Aorta (tissue), 5 donors: ENCODE measurements at regions of chr15 and their contacts with region 1.

Region 1: GRCh38 chr15:64162870-64163658 is at the start of gene PPIB:
- DNase-seq: peak; percentile 99
- ATAC-seq: peak; percentile 99
- H3K4me3 ChIP-seq: peak within 1 kb of the TSS; percentile 63 to 97
- H3K27ac ChIP-seq: peak within 1 kb of the TSS in 1 of 2 donors; percentile 64
- H3K4me1 ChIP-seq: peaks cover 0 to 2% of the 10 kb centered on the region in 2 donors
- H3K27me3 ChIP-seq: no peaks in the 10 kb centered on the region
- total RNA-seq, gene PPIB: 362 to 395 TPM

Region 2: GRCh38 chr15:64093627-64094417 is 69.2 kb before region 1 on chr15 and contains the start of gene CIAO2A:
- intact Hi-C with region 1: loop called in 1 of 2 experiments (anchors 5 kb)
- DNase-seq: peak; percentile 95 to 98
- ATAC-seq: peak; percentile 95
- H3K4me3 ChIP-seq: peak within 1 kb of the TSS; percentile 96 to 99
- H3K27ac ChIP-seq: peak within 1 kb of the TSS; percentile 39 to 80
- H3K4me1 ChIP-seq: no peaks in the 10 kb centered on the region
- H3K27me3 ChIP-seq: no peaks in the 10 kb centered on the region
- total RNA-seq, gene CIAO2A: 23.2 to 27.4 TPM

Region 3: DNA sequence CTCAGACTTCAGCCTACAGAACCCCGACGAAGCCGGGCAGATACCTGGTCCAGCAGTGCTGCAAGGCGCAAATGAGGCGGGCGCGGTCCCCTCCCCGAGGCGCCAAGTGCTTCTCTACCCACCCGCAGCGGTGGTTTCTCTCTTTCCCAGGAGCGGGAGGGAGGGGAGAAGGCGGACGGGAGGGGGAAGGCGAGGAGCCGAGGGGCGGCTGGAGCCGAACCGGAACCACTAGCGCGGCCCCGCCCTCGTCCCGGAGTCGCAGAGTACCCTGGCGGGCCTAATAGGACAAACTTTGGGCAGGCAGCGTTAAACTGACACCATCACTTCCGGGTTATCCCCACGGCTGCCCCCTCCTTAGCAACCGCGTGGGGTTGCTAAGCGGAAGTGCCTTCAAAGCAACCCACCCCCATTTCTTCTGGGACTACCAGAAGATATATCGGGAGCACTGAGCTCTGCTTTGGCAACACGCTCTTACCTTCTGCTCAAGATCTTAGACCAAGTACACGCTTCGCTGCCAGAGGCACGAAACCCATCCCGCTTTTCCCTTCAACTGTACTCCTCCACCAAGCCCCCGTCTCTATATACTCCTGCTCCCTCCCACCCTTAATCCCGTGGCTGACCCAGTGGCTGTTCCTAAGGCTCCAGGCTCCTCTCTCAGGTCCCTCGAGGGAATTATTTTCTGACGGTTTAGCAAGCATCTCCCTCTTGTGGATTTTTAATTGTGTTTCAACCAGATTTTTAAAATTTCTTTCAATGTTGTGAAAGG is 193.1 kb after region 1 on chr15 and contains the start of gene CSNK1G1:
- intact Hi-C with region 1: loop called (anchors 1 to 10 kb)
- DNase-seq: peak; percentile 97 to 98
- ATAC-seq: peak; percentile 99
- H3K4me3 ChIP-seq: peak within 1 kb of the TSS; percentile 90 to 91
- H3K27ac ChIP-seq: peak within 1 kb of the TSS in 1 of 2 donors; percentile 9
- H3K4me1 ChIP-seq: no peaks in the 10 kb centered on the region
- H3K27me3 ChIP-seq: no peaks in the 10 kb centered on the region
- total RNA-seq, gene CSNK1G1: 15.1 to 25.3 TPM

Region 4: GRCh38 chr15:64387562-64388168 is 224.6 kb after region 1 on chr15 and contains the start of gene TRIP4:
- intact Hi-C with region 1: loop called in 1 of 2 experiments (anchors 10 kb)
- DNase-seq: peak; percentile 98
- ATAC-seq: peak; percentile 99
- H3K4me3 ChIP-seq: peak within 1 kb of the TSS; percentile 76 to 81
- H3K27ac ChIP-seq: peak within 1 kb of the TSS in 1 of 2 donors; percentile 42
- H3K4me1 ChIP-seq: peaks cover 0 to 3% of the 10 kb centered on the region in 2 donors
- H3K27me3 ChIP-seq: no peaks in the 10 kb centered on the region
- total RNA-seq, gene TRIP4: 26.0 to 27.6 TPM